Breast epithelium (tissue), 4 donors: ENCODE measurements at regions of chr5 and their contacts with region 1.

Region 1: GRCh38 chr5:97094579-97095317 is 47.7 kb downstream of the LIX1 start:
- DNase-seq: no peak
- H3K4me3 ChIP-seq: no peak overlapping the region
- H3K27ac ChIP-seq: no peak overlapping the region
- H3K4me1 ChIP-seq: no peaks in the 10 kb centered on the region
- H3K27me3 ChIP-seq: no peaks in the 10 kb centered on the region
- CTCF ChIP-seq: no peak
- POLR2A ChIP-seq: no peak

Region 2: DNA sequence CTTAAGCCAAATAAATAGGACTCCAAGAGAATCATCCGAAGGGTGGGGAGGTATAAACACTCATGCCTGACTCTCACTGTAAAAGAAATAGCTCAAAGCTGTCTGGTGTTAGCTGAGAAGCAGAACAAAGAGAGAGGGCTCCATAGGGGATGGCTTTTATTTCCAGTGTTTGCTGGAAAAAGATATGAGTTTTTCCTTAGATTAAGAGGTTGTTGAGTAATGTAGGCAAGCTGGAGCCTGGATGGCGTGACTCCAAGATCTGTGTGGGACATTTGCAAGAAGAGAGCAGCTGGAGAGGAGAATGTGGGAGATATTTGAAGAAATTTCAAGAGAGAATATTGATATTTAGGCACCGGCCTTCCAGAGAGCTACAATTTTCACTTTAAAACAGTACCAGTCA is 885.0 kb after region 1 on chr5:
- intact Hi-C with region 1: loop called (anchors 5 kb)
- DNase-seq: no peak
- H3K4me3 ChIP-seq: no peak overlapping the region
- H3K27ac ChIP-seq: no peak overlapping the region
- H3K4me1 ChIP-seq: no peaks in the 10 kb centered on the region
- H3K27me3 ChIP-seq: no peaks in the 10 kb centered on the region
- CTCF ChIP-seq: no peak
- POLR2A ChIP-seq: no peak